ENCODE measurements at regions of chr1 and their contacts with region 1.

Region 1: GRCh38 chr1:109790735-109791494 is 27.2 kb upstream of the EPS8L3 start:
- DNase-seq: peak; percentile 82 to 88
- H3K4me3 ChIP-seq: peak overlapping the region; percentile 36; the same call in 1 of the 2 replicates
- H3K27ac ChIP-seq: peak overlapping the region; percentile 95
- H3K4me1 ChIP-seq: peaks cover 94% of the 10 kb centered on the region
- H3K27me3 ChIP-seq: no peaks in the 10 kb centered on the region
- CTCF ChIP-seq: peak; percentile 61

Region 2: GRCh38 chr1:109739738-109740660 is 50.9 kb before region 1 on chr1:
- CTCF ChIA-PET with region 1: no interaction called
- POLR2A ChIA-PET with region 1: no interaction called
- intact Hi-C with region 1: no loop called
- DNase-seq: peak; percentile 66 to 80
- H3K4me3 ChIP-seq: peak overlapping the region; percentile 59
- H3K27ac ChIP-seq: no peak overlapping the region
- H3K4me1 ChIP-seq: peaks cover 15% of the 10 kb centered on the region
- H3K27me3 ChIP-seq: no peaks in the 10 kb centered on the region
- CTCF ChIP-seq: no peak

Region 3: DNA sequence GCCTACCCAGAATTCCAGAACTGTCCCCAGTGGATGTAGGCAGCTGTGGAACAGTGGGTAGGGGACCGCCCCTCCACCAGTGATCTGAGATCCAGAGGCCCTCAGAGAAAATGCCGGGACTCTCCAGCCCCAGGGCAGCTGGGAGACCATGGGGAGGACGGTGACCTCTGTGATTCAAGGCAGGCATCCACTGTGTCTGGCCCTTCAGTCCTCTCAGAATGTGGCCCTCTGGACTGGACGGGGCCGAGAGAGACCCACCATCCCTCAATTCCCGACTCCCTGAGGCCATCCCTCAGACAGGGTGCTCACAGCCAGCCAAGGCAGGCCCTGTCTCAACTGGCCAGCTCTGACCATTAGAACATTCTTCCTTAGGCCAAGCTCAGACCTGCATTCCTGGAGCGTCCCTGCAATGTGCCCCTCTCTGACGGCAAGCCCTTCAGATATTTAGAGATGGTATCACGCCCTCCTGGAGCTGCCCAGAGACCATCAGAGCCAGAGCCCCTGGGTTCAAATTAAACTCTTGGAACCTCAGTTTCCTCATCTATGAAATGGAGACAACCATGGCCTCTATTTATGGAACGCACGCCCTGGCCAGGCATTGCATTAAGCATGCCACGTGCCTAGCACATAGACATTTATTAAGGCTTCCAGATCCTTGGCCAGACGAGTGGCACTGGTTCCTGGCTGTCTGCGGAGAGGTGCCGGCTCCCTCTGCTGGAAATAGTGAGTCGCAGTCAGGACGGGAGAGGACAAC is 17.6 kb before region 1 on chr1:
- CTCF ChIA-PET with region 1: interaction called, 8 read pairs
- POLR2A ChIA-PET with region 1: interaction called, 27 read pairs
- intact Hi-C with region 1: loop called (anchors 1 kb)
- DNase-seq: peak; percentile 78 to 82
- H3K4me3 ChIP-seq: no peak overlapping the region
- H3K27ac ChIP-seq: no peak overlapping the region
- H3K4me1 ChIP-seq: peaks cover 46% of the 10 kb centered on the region
- H3K27me3 ChIP-seq: no peaks in the 10 kb centered on the region
- CTCF ChIP-seq: peak; percentile 97

Region 4: GRCh38 chr1:109877320-109877771 is 86.4 kb after region 1 on chr1:
- CTCF ChIA-PET with region 1: interaction called, 17 read pairs
- POLR2A ChIA-PET with region 1: interaction called, 4 read pairs
- intact Hi-C with region 1: loop called (anchors 1 kb)
- DNase-seq: peak; percentile 82 to 93
- H3K4me3 ChIP-seq: peak overlapping the region; percentile 30; the same call in 1 of the 2 replicates
- H3K27ac ChIP-seq: peak overlapping the region; percentile 82
- H3K4me1 ChIP-seq: peaks cover 44% of the 10 kb centered on the region
- H3K27me3 ChIP-seq: no peaks in the 10 kb centered on the region
- CTCF ChIP-seq: peak; percentile 56; the same call in 1 of the 2 replicates

Region 5: GRCh38 chr1:109910123-109910962 is 119.4 kb after region 1 on chr1 and contains the start of gene CSF1:
- CTCF ChIA-PET with region 1: no interaction called
- POLR2A ChIA-PET with region 1: interaction called, 25 read pairs
- intact Hi-C with region 1: loop called (anchors 5 kb)
- DNase-seq: peak; percentile 53 to 58
- H3K4me3 ChIP-seq: peak within 1 kb of the TSS; percentile 98
- H3K27ac ChIP-seq: 0 out of 2 replicates have a peak within 1 kb of the TSS, but pooled peaks have one; percentile 9
- H3K4me1 ChIP-seq: peaks cover 44% of the 10 kb centered on the region
- H3K27me3 ChIP-seq: no peaks in the 10 kb centered on the region
- CTCF ChIP-seq: no peak
- total RNA-seq, gene CSF1: 29.8 and 35.2 TPM in 2 replicates

Region 6: DNA sequence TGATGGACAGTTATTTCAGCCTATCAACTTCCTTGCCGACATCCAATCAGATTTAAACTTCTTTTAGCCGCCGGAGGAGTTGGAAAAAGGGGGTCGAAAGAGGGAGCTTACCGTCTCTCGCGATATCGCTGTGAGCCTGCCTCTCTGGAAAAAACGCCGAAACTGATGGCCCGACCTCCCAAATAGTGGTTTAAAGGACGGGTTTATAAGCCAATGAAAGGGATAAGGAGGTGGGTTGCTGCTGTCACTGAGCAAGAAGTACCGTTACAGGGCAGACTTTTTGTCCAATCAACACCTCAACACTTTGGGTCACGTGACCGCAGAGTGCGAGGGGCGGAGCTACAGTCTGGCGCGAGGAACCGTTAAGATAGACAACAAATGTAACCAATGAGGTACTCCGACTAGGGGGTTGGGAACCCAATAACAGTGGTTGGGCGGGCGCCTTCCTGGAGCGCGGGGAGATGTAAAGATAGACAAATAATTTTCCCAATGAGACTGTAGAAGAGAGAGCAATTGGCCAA is 548.0 kb after region 1 on chr1 and contains the start of gene RBM15:
- CTCF ChIA-PET with region 1: no interaction called
- POLR2A ChIA-PET with region 1: interaction called, 15 read pairs
- intact Hi-C with region 1: no loop called
- DNase-seq: peak; percentile 97 to 100
- H3K4me3 ChIP-seq: peak within 1 kb of the TSS; percentile 77
- H3K27ac ChIP-seq: peak within 1 kb of the TSS; percentile 88
- H3K4me1 ChIP-seq: peaks cover 64% of the 10 kb centered on the region
- H3K27me3 ChIP-seq: no peaks in the 10 kb centered on the region
- CTCF ChIP-seq: no peak
- total RNA-seq, gene RBM15: 42.7 and 43.1 TPM in 2 replicates